Endothelial cell of umbilical vein (primary cell): ENCODE measurements at regions of chr22 and their contacts with region 1.

Region 1: DNA sequence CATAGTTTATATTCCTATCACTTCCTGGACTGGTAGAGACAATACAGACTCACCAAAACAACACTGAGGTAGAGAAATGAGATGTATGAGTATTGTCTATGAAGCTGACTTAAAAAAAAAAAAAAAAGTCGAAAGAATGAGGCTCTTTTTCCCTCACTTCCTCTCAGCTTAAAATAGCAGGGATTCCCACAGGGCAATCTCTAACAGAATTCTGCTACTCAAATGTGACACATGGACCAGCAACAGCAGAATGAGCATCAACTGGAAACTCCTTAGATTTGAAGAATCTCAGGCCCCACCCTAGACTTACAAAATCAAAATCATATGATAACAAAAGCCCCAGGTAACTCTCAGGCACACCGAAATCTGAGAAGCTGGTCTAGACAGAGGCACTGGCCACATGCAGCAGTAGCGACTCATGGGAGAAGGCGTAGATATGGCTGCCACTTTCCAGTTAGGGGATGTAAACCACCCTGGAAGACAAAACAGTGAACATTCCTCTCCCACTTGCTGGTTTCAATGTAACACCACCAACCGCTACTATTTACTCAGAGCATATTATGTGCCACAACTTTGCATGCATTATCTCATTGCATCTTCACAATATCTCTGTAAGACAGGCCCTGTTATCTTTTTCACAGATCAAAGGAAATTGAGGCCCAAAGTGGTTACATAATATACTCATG is 128.0 kb downstream of the RBFOX2 start:
- DNase-seq: peak; percentile 28
- H3K4me3 ChIP-seq: no peak overlapping the region
- H3K27ac ChIP-seq: peak overlapping the region; percentile 32
- H3K4me1 ChIP-seq: peaks cover 30% of the 10 kb centered on the region
- H3K27me3 ChIP-seq: no peaks in the 10 kb centered on the region
- CTCF ChIP-seq: no peak
- POLR2A ChIP-seq: no peak

Region 2: DNA sequence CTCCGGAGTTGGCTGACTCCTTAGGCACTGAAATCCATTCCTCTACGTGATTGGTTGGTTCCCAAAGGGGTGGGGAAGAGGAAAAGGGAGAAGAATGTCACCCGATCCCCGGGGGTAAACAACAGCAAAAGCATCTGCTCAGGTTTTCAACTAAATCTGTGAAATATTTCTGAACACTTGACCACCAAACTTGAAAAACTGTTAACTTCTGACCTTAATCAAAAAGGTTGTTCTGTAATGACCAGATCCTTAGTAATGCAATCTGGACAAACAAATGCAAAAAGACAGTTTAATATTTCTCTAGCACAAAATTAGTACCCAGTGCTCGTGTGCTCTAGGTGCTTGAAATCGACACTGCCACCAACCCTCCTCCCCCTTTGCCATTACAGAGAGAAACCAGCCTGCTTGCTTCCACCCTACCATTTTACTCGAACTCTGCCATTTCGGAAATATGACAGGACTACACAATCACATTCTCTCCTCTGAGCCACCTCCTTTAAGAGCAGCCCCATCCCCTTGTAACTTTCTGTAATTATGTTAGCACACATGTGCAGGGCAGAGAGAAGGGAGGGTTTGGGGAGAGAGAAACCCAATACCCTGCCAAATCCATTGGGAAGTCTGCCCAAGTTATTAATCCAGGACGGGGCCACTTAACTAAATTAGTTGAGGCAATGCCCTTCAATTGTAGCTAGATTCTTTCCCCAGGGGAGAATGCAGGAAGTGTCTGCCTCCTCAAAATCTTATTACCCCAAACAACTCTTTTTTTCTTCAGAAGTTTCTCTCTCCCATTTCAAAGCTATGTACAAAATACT is 14.2 kb after region 1 on chr22:
- CTCF ChIA-PET with region 1: interaction called, 7 read pairs
- POLR2A ChIA-PET with region 1: no interaction called
- dilution Hi-C with region 1: no loop called
- intact Hi-C with region 1: loop called (anchors 1 kb)
- DNase-seq: peak; percentile 88
- H3K4me3 ChIP-seq: peak overlapping the region; percentile 26 to 68 (median 28)
- H3K27ac ChIP-seq: peak overlapping the region; percentile 27
- H3K4me1 ChIP-seq: peaks cover 35% of the 10 kb centered on the region
- H3K27me3 ChIP-seq: no peaks in the 10 kb centered on the region
- CTCF ChIP-seq: no peak
- POLR2A ChIP-seq: peak; percentile 36

Region 3: GRCh38 chr22:36009085-36009484 is 108.5 kb after region 1 on chr22:
- CTCF ChIA-PET with region 1: no interaction called
- POLR2A ChIA-PET with region 1: no interaction called
- dilution Hi-C with region 1: no loop called
- intact Hi-C with region 1: no loop called
- DNase-seq: peak; percentile 57
- H3K4me3 ChIP-seq: no peak overlapping the region
- H3K27ac ChIP-seq: no peak overlapping the region
- H3K4me1 ChIP-seq: peaks cover 13% of the 10 kb centered on the region
- H3K27me3 ChIP-seq: no peaks in the 10 kb centered on the region
- CTCF ChIP-seq: no peak
- POLR2A ChIP-seq: no peak